Activated naive CD4-positive, alpha-beta T cell treated with anti-CD3 and anti-CD28 coated beads for 36 hours (primary cell): ENCODE measurements at regions of chr13 and their contacts with region 1.

Region 1: GRCh38 chr13:42497798-42498197 is 76.2 kb upstream of the TNFSF11 start:
- DNase-seq: peak; percentile 64
- H3K4me3 Mint-ChIP-seq: no peak overlapping the region
- H3K27ac Mint-ChIP-seq: peak overlapping the region; percentile 69
- H3K4me1 Mint-ChIP-seq: peaks cover 40% of the 10 kb centered on the region
- H3K27me3 Mint-ChIP-seq: no peaks in the 10 kb centered on the region

Region 2: DNA sequence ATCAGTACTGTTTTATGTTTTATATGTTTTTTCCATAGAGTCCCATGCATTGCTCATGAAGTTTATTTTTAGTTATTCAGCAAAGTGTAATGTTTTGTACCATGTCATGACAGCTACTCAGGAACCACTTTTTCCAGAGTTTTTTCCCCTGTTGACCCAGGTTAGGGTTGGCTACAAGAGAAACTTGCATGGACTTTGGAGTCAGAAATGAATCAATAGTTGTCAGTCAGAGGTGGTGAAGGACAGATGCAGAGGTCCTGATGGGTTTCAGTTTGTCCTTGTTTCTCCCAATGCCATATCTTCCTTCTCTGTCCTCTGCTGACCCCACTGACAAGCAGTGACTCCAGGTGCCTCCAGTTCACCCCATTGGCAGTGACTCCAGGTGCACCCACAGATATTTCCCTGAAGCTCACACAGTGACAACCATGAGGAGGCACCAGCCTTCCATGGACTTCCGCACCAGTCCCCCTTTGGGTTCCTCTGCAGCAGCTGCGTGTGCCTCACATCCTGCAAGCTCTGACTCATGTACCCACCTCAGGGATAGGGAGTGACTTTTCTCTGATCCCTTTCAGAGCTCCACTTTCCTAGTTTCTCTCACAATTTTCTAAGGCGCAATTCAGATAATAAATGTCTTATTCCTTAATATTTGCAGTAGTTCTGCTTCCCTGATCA is 133.7 kb before region 1 on chr13:
- CTCF ChIA-PET with region 1: no interaction called
- intact Hi-C with region 1: no loop called
- DNase-seq: no peak
- H3K4me3 Mint-ChIP-seq: no peak overlapping the region
- H3K27ac Mint-ChIP-seq: no peak overlapping the region
- H3K4me1 Mint-ChIP-seq: peaks cover 25% of the 10 kb centered on the region
- H3K27me3 Mint-ChIP-seq: no peaks in the 10 kb centered on the region

Region 3: DNA sequence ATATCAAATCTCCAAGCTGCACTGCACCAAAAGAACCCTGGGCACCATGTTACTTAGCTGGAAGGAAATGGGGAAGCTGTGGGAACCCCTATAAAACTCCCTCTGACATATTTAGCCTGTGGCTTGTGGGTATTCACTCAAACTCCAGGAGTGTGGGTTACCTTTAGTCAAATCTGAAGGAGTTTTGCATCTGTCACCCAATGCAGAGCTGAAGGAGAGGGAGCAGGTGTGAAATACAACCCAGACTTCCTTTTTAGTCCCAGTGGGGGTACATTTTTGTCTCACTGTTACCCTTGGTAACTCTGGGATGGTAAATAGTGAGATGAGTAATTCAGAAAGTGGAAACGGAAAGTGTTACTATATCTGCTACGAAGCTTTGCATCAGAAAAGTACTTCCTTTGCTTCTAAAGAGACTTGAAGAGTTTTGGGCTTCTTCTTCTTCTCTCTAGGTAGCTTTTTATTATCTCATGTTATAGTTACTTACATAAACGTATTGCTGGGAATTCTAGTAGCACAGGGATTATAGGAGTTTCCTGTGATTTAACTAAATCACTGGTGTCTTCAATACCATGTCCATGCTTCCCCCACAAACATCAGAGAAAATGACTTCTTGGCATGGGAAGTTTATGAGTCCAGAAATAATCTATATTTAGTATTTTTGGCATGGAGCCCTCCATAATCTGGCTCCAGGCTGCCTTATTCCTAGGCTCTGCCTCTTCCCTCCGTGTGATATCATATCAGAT is 120.0 kb before region 1 on chr13:
- CTCF ChIA-PET with region 1: no interaction called
- intact Hi-C with region 1: loop called (anchors 1 kb)
- DNase-seq: peak; percentile 71
- H3K4me3 Mint-ChIP-seq: no peak overlapping the region
- H3K27ac Mint-ChIP-seq: peak overlapping the region; percentile 95
- H3K4me1 Mint-ChIP-seq: peaks cover 59% of the 10 kb centered on the region
- H3K27me3 Mint-ChIP-seq: no peaks in the 10 kb centered on the region

Region 4: GRCh38 chr13:42405665-42406390 is 92.0 kb before region 1 on chr13:
- CTCF ChIA-PET with region 1: no interaction called
- intact Hi-C with region 1: loop called (anchors 1 kb)
- DNase-seq: peak; percentile 87
- H3K4me3 Mint-ChIP-seq: peak overlapping the region; percentile 51
- H3K27ac Mint-ChIP-seq: peak overlapping the region; percentile 96
- H3K4me1 Mint-ChIP-seq: peaks cover 41% of the 10 kb centered on the region
- H3K27me3 Mint-ChIP-seq: no peaks in the 10 kb centered on the region

Region 5: DNA sequence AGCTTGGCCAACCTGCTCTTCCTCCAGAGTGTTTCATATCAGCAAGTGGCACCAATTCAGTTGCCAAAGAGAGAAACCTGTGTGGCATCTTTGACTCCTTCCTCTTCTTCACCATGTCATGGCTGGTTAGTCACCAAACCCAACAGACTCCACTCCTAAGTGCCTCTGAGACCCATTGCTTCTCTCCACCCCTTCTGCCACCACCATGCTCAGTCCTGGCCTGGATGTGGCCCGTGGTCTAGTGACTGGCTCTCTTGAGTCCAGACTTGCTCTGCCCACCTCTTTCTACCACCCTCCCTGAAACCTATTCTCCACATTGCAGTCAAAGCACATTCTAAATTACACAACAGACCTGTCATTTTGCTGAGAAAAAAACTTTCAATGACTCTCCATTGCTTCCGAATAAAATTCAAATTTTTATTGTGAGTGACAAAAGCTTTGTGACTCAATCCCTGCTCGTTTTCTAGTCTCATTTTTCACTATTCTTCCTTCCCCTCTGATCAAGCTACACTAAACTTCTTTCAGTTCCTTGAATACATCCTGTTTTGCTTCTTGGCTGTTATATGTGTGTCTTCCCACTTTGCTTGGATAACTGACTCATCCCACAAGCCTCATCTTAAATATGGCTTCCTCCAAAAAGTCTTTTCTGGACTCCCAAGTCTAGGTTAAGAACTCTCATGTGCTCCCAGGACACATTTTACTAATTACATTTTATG is 64.1 kb after region 1 on chr13:
- CTCF ChIA-PET with region 1: no interaction called
- intact Hi-C with region 1: loop called (anchors 1 kb)
- DNase-seq: no peak
- H3K4me3 Mint-ChIP-seq: no peak overlapping the region
- H3K27ac Mint-ChIP-seq: peak overlapping the region; percentile 9
- H3K4me1 Mint-ChIP-seq: peaks cover 10% of the 10 kb centered on the region
- H3K27me3 Mint-ChIP-seq: peaks cover 5% of the 10 kb centered on the region

Region 6: DNA sequence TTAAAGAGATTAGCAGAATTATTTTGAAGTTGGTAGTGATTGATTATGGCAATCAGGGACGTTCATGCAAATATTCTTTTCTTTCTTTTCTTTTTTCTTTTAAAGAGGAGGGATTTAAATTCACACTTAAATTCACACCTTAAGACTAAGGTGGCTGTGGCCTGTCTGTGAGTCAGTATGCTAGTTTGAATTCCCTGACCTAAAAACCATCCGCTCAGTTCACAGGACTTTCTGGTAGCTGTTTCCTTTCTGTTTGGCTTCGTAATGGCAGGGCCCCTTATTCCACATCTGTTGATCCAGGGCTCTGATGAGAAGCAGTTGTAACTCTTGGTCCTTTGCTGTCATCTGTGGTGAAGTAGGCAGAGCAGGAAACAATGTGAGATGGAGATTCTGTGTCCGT is 83.6 kb after region 1 on chr13:
- CTCF ChIA-PET with region 1: no interaction called
- intact Hi-C with region 1: no loop called
- DNase-seq: no peak
- H3K4me3 Mint-ChIP-seq: no peak overlapping the region
- H3K27ac Mint-ChIP-seq: no peak overlapping the region
- H3K4me1 Mint-ChIP-seq: peaks cover 5% of the 10 kb centered on the region
- H3K27me3 Mint-ChIP-seq: peaks cover 7% of the 10 kb centered on the region

Region 7: GRCh38 chr13:42991892-42992763 is 494.3 kb after region 1 on chr13 and contains the start of gene EPSTI1:
- CTCF ChIA-PET with region 1: no interaction called
- intact Hi-C with region 1: loop called (anchors 5 kb)
- DNase-seq: peak; percentile 84
- H3K4me3 Mint-ChIP-seq: peak within 1 kb of the TSS; percentile 87
- H3K27ac Mint-ChIP-seq: peak within 1 kb of the TSS; percentile 98
- H3K4me1 Mint-ChIP-seq: peaks cover 52% of the 10 kb centered on the region
- H3K27me3 Mint-ChIP-seq: no peaks in the 10 kb centered on the region
- total RNA-seq, gene EPSTI1: 17.4 to 19.8 TPM

Region 8: GRCh38 chr13:43792076-43792881 is 1294.5 kb after region 1 on chr13:
- CTCF ChIA-PET with region 1: no interaction called
- intact Hi-C with region 1: loop called (anchors 10 kb)
- DNase-seq: no peak
- H3K4me3 Mint-ChIP-seq: no peak overlapping the region
- H3K27ac Mint-ChIP-seq: no peak overlapping the region
- H3K4me1 Mint-ChIP-seq: peaks cover 21% of the 10 kb centered on the region
- H3K27me3 Mint-ChIP-seq: peaks cover 40% of the 10 kb centered on the region